Activated CD4-positive, alpha-beta memory T cell treated with anti-CD3 and anti-CD28 coated beads for 36 hours (primary cell): ENCODE measurements at regions of chr14 and their contacts with region 1.

Region 1: DNA sequence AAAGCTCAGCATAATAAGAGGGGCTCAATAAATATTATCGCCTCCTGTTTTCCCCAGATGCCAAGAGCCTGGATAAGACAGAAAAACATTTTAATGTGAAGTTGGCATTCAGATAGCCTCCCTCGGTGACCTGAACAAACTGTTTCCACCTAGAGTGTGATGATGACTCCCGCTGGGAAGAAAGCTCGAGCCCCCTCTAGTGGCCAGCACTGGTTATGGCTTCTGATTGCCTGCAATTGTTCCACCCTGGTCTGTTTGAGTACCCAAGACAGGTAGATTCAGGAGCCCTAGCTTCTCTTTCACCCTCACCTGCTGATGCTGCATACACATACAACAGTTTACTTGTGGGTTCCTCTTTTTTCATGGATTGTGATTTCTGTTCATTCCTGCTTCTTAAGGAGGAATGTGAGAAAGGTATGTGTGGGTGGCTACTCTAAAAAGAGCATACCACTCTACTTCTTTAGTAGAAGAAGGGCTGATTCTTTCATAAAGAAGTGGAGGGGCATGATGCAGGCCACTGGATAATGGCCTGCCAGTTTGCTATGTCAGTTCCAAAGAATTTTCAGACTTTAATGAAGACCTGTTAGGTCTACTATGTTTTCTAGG is 6.4 kb downstream of the ERG28 start:
- DNase-seq: peak; percentile 89
- H3K4me3 Mint-ChIP-seq: no peak overlapping the region
- H3K27ac Mint-ChIP-seq: no peak overlapping the region
- H3K4me1 Mint-ChIP-seq: peaks cover 16% of the 10 kb centered on the region
- H3K27me3 Mint-ChIP-seq: no peaks in the 10 kb centered on the region

Region 2: GRCh38 chr14:75487155-75487671 is 167.0 kb before region 1 on chr14:
- CTCF ChIA-PET with region 1: interaction called, 11 read pairs
- POLR2A ChIA-PET with region 1: no interaction called
- intact Hi-C with region 1: no loop called
- DNase-seq: peak; percentile 25
- H3K4me3 Mint-ChIP-seq: no peak overlapping the region
- H3K27ac Mint-ChIP-seq: peak overlapping the region; percentile 62
- H3K4me1 Mint-ChIP-seq: peaks cover 22% of the 10 kb centered on the region
- H3K27me3 Mint-ChIP-seq: peaks cover 2% of the 10 kb centered on the region

Region 3: GRCh38 chr14:75514673-75515628 is 139.3 kb before region 1 on chr14:
- CTCF ChIA-PET with region 1: interaction called, 13 read pairs
- POLR2A ChIA-PET with region 1: interaction called, 7 read pairs
- intact Hi-C with region 1: loop called (anchors 1 kb)
- DNase-seq: peak; percentile 77
- H3K4me3 Mint-ChIP-seq: peak overlapping the region; percentile 80
- H3K27ac Mint-ChIP-seq: peak overlapping the region; percentile 95
- H3K4me1 Mint-ChIP-seq: peaks cover 69% of the 10 kb centered on the region
- H3K27me3 Mint-ChIP-seq: no peaks in the 10 kb centered on the region

Region 4: GRCh38 chr14:75531660-75532317 is 122.4 kb before region 1 on chr14:
- CTCF ChIA-PET with region 1: interaction called, 11 read pairs
- POLR2A ChIA-PET with region 1: no interaction called
- intact Hi-C with region 1: no loop called
- DNase-seq: no peak
- H3K4me3 Mint-ChIP-seq: peak overlapping the region; percentile 45
- H3K27ac Mint-ChIP-seq: peak overlapping the region; percentile 70
- H3K4me1 Mint-ChIP-seq: peaks cover 84% of the 10 kb centered on the region
- H3K27me3 Mint-ChIP-seq: no peaks in the 10 kb centered on the region

Region 5: DNA sequence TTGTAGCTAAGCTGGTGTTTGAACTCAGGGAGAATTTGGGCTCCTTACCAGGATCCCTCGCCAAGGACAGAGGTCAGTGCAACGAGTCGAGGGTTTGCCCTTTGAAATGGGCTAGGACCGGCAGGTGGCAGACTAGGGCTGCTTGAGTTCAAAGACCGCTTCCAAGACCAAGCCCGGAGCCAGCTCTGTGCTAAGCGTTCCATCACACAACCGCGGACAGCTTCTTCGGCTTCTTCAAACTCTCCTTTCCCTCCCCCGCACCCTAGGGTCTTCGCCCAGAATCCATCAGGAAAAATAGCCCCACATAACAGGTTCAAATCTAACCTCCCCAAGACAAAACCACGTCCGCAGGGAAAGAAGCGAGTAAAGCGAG is 76.5 kb before region 1 on chr14:
- CTCF ChIA-PET with region 1: interaction called, 336 read pairs
- POLR2A ChIA-PET with region 1: interaction called, 10 read pairs
- intact Hi-C with region 1: loop called (anchors 1 kb)
- DNase-seq: peak; percentile 87
- H3K4me3 Mint-ChIP-seq: peak overlapping the region; percentile 86
- H3K27ac Mint-ChIP-seq: peak overlapping the region; percentile 88
- H3K4me1 Mint-ChIP-seq: peaks cover 13% of the 10 kb centered on the region
- H3K27me3 Mint-ChIP-seq: no peaks in the 10 kb centered on the region

Region 6: GRCh38 chr14:75673345-75674035 is 19.3 kb after region 1 on chr14:
- CTCF ChIA-PET with region 1: interaction called, 11 read pairs
- POLR2A ChIA-PET with region 1: no interaction called
- intact Hi-C with region 1: no loop called
- DNase-seq: no peak
- H3K4me3 Mint-ChIP-seq: no peak overlapping the region
- H3K27ac Mint-ChIP-seq: peak overlapping the region; percentile 40
- H3K4me1 Mint-ChIP-seq: peaks cover 27% of the 10 kb centered on the region
- H3K27me3 Mint-ChIP-seq: no peaks in the 10 kb centered on the region